ENCODE measurements at regions of chr19 and their contacts with region 1.

Region 1: DNA sequence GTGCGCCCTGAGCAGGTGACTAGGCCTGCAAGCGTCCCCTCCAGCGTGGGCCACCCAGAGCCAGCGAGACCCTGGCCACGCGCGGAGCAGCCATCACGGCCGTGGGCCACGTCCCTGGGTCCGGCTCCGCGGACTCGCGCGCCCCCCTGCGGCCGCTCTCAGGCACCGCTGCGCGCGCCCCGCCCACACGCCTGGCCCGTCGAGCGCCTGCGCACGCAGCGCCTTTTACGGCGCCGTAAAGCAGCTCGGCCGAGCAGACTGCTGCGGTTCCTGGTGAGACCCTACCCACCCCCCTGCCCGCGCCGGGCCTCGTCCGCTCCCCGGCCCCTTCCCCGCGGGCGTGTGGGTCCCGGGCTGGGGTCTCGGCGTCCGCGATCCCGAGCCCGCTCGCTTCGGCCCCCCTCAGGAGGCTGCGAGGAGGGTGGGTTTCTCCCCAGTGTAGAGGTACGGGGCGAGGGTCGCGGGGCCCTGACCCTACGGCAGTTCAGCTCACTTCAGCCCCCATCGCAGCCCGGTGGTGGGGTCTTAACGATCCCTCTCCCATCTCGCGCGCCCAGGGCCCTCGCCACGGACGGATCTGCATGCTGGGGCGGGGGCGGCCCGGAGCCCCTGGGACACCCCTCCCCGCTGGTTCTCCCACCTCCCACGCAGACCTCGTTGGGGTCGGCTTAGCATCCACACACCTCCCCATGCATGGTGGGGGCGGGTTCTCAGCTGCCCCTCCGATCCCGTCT is at the start of gene TRAPPC5:
- DNase-seq: peak; percentile 91
- ATAC-seq: peak; percentile 53
- H3K4me3 Mint-ChIP-seq: peak within 1 kb of the TSS; percentile 93
- H3K27ac Mint-ChIP-seq: peak within 1 kb of the TSS; percentile 93
- H3K4me1 Mint-ChIP-seq: peaks cover 61% of the 10 kb centered on the region
- H3K27me3 Mint-ChIP-seq: peaks cover 14% of the 10 kb centered on the region
- CTCF ChIP-seq: peak; percentile 78
- total RNA-seq, gene TRAPPC5: 110 and 123 TPM in 2 replicates

Region 2: GRCh38 chr19:7562646-7563393 is 118.0 kb before region 1 on chr19:
- CTCF ChIA-PET with region 1: interaction called, 20 read pairs
- POLR2A ChIA-PET with region 1: no interaction called
- intact Hi-C with region 1: loop called (anchors 1 kb)
- DNase-seq: no peak
- ATAC-seq: no peak
- H3K4me3 Mint-ChIP-seq: no peak overlapping the region
- H3K27ac Mint-ChIP-seq: no peak overlapping the region
- H3K4me1 Mint-ChIP-seq: no peaks in the 10 kb centered on the region
- H3K27me3 Mint-ChIP-seq: no peaks in the 10 kb centered on the region
- CTCF ChIP-seq: no peak

Region 3: DNA sequence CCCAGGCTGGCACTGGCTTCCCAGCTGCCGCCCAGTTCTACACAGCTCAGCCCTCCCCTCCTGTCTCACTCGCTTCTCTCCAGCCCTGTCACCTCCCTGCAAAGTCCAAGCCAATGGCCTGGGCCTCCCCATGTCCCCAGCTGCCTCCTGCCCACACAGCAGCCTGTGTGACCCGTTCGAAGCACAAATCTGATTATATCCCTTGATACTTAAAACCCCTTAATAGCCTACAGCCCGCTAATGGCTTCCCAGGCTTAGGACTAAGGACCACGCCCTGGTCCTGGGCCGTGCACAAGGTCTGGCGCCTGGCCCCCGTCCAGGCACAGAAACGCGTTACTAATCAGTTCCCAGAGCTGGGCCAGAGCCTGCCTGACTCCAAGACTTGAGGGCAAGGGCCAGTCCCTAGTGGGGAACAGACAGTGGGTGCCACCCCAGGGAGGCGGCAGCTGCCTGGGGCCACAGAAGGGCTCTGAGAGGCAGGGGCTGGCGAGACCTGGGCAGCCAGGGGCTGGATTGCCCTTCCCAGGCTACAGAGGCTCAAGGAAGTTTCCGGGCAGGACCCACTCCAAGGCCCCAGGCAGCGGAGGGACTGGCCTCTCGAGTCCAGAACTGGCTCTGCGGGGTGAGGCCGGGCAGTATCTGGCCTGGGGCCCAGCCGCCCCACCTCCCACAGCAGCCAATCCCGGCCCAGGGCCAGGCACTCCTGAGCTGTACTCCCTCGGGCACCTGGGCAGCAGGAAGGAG is 61.8 kb before region 1 on chr19:
- CTCF ChIA-PET with region 1: no interaction called
- POLR2A ChIA-PET with region 1: no interaction called
- intact Hi-C with region 1: no loop called
- DNase-seq: no peak
- ATAC-seq: no peak
- H3K4me3 Mint-ChIP-seq: no peak overlapping the region
- H3K27ac Mint-ChIP-seq: no peak overlapping the region
- H3K4me1 Mint-ChIP-seq: no peaks in the 10 kb centered on the region
- H3K27me3 Mint-ChIP-seq: no peaks in the 10 kb centered on the region
- CTCF ChIP-seq: no peak

Region 4: GRCh38 chr19:7699417-7700401 is 18.9 kb after region 1 on chr19:
- CTCF ChIA-PET with region 1: interaction called, 48 read pairs
- POLR2A ChIA-PET with region 1: interaction called, 42 read pairs
- intact Hi-C with region 1: loop called (anchors 1 kb)
- DNase-seq: no peak
- ATAC-seq: no peak
- H3K4me3 Mint-ChIP-seq: peak overlapping the region; percentile 84
- H3K27ac Mint-ChIP-seq: peak overlapping the region; percentile 97
- H3K4me1 Mint-ChIP-seq: peaks cover 99% of the 10 kb centered on the region
- H3K27me3 Mint-ChIP-seq: no peaks in the 10 kb centered on the region
- CTCF ChIP-seq: no peak

Region 5: DNA sequence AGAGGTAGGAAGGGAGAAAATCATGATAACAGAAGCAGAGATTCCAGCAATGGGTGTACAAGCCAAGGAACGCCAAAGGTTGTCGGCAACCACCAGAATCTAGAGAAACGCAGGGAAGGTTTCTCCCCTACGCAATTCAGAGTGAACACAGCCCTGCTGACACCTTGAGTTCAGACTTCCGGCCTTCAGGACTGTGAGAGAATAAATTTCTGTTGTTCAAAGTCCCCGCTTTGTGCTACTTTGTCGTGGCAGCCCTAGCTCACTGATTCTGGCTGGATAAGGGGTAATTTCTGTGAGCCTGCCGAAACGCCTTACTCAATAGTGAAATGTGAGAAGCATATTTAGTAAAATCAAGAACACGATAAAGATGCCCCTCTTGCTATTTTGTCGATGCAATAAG is 56.4 kb after region 1 on chr19:
- CTCF ChIA-PET with region 1: interaction called, 7 read pairs
- POLR2A ChIA-PET with region 1: interaction called, 18 read pairs
- intact Hi-C with region 1: no loop called
- DNase-seq: no peak
- ATAC-seq: no peak
- H3K4me3 Mint-ChIP-seq: no peak overlapping the region
- H3K27ac Mint-ChIP-seq: no peak overlapping the region
- H3K4me1 Mint-ChIP-seq: peaks cover 13% of the 10 kb centered on the region
- H3K27me3 Mint-ChIP-seq: peaks cover 12% of the 10 kb centered on the region
- CTCF ChIP-seq: no peak

Region 6: DNA sequence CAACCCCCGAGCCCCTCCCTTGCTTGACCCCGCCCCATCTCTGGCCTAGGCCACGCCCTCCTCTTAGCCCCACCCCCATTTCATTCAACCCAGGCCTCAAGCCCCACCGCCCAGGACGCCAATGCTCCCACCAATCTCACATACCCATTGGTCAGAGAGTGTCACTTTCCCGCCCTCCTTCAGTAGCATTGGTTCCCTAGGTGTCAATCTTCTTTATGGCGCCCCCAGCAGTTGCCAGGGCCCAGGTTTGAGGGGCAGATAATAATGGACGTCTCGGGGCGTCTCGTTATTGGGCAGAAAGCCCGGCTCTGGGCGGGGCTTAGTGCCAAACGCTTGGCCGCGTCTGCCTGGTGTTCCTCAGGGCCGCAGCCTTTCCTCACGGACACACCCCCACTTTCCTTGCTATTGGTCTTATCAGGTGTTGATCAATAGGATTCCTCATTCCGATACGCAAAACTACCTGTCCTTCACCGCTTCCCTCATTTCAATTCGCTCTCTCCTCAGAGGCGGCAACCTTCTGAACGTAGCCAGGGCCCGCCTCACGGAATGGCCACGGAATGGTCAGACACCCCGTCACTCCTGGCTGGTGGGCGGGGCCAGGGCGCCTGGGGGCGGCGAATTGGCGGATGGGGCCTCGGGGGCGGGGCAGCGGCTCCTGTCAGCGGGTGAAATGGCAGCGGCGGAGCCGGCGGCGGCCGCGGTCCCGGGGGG is 148.9 kb after region 1 on chr19 and contains the start of gene EVI5L:
- CTCF ChIA-PET with region 1: interaction called, 3 read pairs
- POLR2A ChIA-PET with region 1: no interaction called
- intact Hi-C with region 1: loop called (anchors 1 kb)
- DNase-seq: peak; percentile 100
- ATAC-seq: peak; percentile 83
- H3K4me3 Mint-ChIP-seq: peak within 1 kb of the TSS; percentile 86
- H3K27ac Mint-ChIP-seq: peak within 1 kb of the TSS; percentile 80
- H3K4me1 Mint-ChIP-seq: peaks cover 23% of the 10 kb centered on the region
- H3K27me3 Mint-ChIP-seq: no peaks in the 10 kb centered on the region
- CTCF ChIP-seq: no peak
- total RNA-seq, gene EVI5L: 9.2 and 12.8 TPM in 2 replicates

Region 7: GRCh38 chr19:7919610-7920518 is 239.1 kb after region 1 on chr19 and contains the start of gene SNAPC2:
- CTCF ChIA-PET with region 1: interaction called, 3 read pairs
- POLR2A ChIA-PET with region 1: interaction called, 6 read pairs
- intact Hi-C with region 1: loop called (anchors 1 kb)
- DNase-seq: peak; percentile 97
- ATAC-seq: peak; percentile 63
- H3K4me3 Mint-ChIP-seq: peak within 1 kb of the TSS; percentile 93
- H3K27ac Mint-ChIP-seq: peak within 1 kb of the TSS; percentile 96
- H3K4me1 Mint-ChIP-seq: peaks cover 49% of the 10 kb centered on the region
- H3K27me3 Mint-ChIP-seq: peaks cover 17% of the 10 kb centered on the region
- CTCF ChIP-seq: no peak
- total RNA-seq, gene SNAPC2: 14.4 and 15.3 TPM in 2 replicates